ENCODE measurements at regions of chr10 and their contacts with region 1.

Region 1: GRCh38 chr10:48463318-48464003 is 141.4 kb downstream of the ARHGAP22 start:
- DNase-seq: peak; percentile 61
- H3K4me3 ChIP-seq: no peak overlapping the region
- H3K4me3 Mint-ChIP-seq: no peak overlapping the region
- H3K27ac Mint-ChIP-seq: peak overlapping the region; percentile 28
- H3K4me1 ChIP-seq: peaks cover 16% of the 10 kb centered on the region
- H3K4me1 Mint-ChIP-seq: peaks cover 28% of the 10 kb centered on the region
- H3K27me3 ChIP-seq: no peaks in the 10 kb centered on the region
- H3K27me3 Mint-ChIP-seq: no peaks in the 10 kb centered on the region
- CTCF ChIP-seq: peak in 1 of 2 experiments; percentile 47

Region 2: GRCh38 chr10:48484911-48485310 is 21.4 kb after region 1 on chr10:
- CTCF ChIA-PET with region 1: no interaction called
- POLR2A ChIA-PET with region 1: no interaction called
- intact Hi-C with region 1: loop called (anchors 1 kb)
- DNase-seq: no peak
- H3K4me3 ChIP-seq: no peak overlapping the region
- H3K4me3 Mint-ChIP-seq: no peak overlapping the region
- H3K27ac Mint-ChIP-seq: no peak overlapping the region
- H3K4me1 ChIP-seq: peaks cover 10% of the 10 kb centered on the region
- H3K4me1 Mint-ChIP-seq: peaks cover 12% of the 10 kb centered on the region
- H3K27me3 ChIP-seq: no peaks in the 10 kb centered on the region
- H3K27me3 Mint-ChIP-seq: no peaks in the 10 kb centered on the region
- CTCF ChIP-seq: no peak

Region 3: GRCh38 chr10:48495282-48496183 is 32.1 kb after region 1 on chr10:
- CTCF ChIA-PET with region 1: no interaction called
- POLR2A ChIA-PET with region 1: no interaction called
- intact Hi-C with region 1: no loop called
- DNase-seq: no peak
- H3K4me3 ChIP-seq: no peak overlapping the region
- H3K4me3 Mint-ChIP-seq: no peak overlapping the region
- H3K27ac Mint-ChIP-seq: no peak overlapping the region
- H3K4me1 ChIP-seq: peaks cover 8% of the 10 kb centered on the region; the same call in 1 of the 2 replicates
- H3K4me1 Mint-ChIP-seq: peaks cover 6% of the 10 kb centered on the region
- H3K27me3 ChIP-seq: no peaks in the 10 kb centered on the region
- H3K27me3 Mint-ChIP-seq: no peaks in the 10 kb centered on the region
- CTCF ChIP-seq: no peak

Region 4: DNA sequence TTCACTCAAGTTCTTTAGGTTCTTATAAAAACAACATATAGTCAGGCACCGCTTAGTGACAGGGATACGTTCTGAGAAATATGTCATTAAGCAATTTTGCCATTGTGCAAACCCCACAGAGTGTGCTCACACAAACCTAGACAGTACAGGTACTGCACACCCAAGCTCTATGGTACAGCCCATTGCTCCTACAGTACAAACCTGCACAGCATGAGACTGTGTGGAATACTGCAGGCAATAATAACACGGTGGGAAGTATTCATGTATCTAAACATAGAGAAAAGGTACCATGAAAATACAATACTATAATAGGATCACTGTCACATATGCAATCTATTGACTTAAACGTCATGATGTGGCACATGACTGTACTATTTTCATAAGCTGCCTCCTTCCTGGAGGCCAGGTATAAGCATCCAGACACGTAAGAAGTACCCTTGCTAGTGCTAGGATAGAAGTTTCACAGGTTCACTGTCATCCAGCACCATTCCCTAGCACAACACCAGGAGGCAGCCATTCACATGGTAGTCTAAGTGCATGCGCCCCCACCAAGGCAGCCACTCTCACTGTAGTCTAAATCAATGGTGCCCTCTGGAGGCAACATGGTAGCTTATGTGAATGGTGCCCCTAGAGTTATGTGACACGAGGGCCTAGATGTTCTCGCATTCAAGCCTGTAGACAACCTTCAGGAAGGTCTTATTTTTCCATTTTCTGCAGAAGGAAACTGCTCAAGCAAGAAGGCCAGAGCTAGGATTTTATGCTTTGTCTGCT is 42.9 kb after region 1 on chr10:
- CTCF ChIA-PET with region 1: no interaction called
- POLR2A ChIA-PET with region 1: no interaction called
- intact Hi-C with region 1: loop called (anchors 2 kb)
- DNase-seq: peak; percentile 69 to 74
- H3K4me3 ChIP-seq: no peak overlapping the region
- H3K4me3 Mint-ChIP-seq: no peak overlapping the region
- H3K27ac Mint-ChIP-seq: no peak overlapping the region
- H3K4me1 ChIP-seq: no peaks in the 10 kb centered on the region
- H3K4me1 Mint-ChIP-seq: no peaks in the 10 kb centered on the region
- H3K27me3 ChIP-seq: no peaks in the 10 kb centered on the region
- H3K27me3 Mint-ChIP-seq: no peaks in the 10 kb centered on the region
- CTCF ChIP-seq: peak; percentile 56 to 68

Measured in Caco-2 (cell line).